BJ (cell line): ENCODE measurements at regions of chr14 and their contacts with region 1.

Region 1: GRCh38 chr14:24351517-24351916 is 11.7 kb upstream of the RIPK3 start:
- DNase-seq: no peak
- H3K4me3 ChIP-seq: no peak overlapping the region
- H3K27me3 ChIP-seq: peaks cover 6% of the 10 kb centered on the region; the same call in 1 of the 2 replicates
- CTCF ChIP-seq: peak; percentile 18

Region 2: GRCh38 chr14:24339284-24340151 is 12.0 kb before region 1 on chr14 and contains the start of gene RIPK3:
- CTCF ChIA-PET with region 1: interaction called, 42 read pairs
- POLR2A ChIA-PET with region 1: no interaction called
- DNase-seq: no peak
- H3K4me3 ChIP-seq: peak within 1 kb of the TSS; percentile 41
- H3K27me3 ChIP-seq: peaks cover 5% of the 10 kb centered on the region
- CTCF ChIP-seq: no peak
- polyA plus RNA-seq, gene RIPK3: 4.3 and 4.4 TPM in 2 replicates